Ascending aorta (tissue), 2 donors: ENCODE measurements at regions of chr2 and their contacts with region 1.

Region 1: DNA sequence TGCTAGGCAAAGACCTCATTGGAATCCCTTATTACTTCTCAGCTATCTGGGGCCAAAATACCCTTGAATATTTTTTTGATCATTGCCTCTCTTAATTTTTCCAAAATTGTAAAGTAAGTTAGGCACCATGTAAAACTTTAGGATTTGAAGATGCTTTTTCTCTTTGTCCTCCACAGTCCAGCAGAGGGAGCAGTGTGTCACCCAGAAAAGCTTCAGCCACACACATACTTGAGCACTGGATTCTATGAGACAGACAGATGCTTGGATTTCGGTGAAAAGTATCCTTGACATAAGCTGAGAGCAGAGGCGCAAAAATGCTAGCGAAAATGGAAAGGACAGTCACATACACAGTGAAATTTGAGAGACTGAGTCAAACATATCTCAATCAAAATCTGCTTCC is 74.7 kb upstream of the KCNJ3 start:
- DNase-seq: peak in 1 of 2 donors; percentile 65
- H3K4me3 ChIP-seq: no peak overlapping the region
- H3K27ac ChIP-seq: no peak overlapping the region
- H3K4me1 ChIP-seq: no peaks in the 10 kb centered on the region
- H3K27me3 ChIP-seq: no peaks in the 10 kb centered on the region
- CTCF ChIP-seq: peak; percentile 27 to 74 (median 73)

Region 2: GRCh38 chr2:154452906-154453493 is 170.8 kb before region 1 on chr2:
- intact Hi-C with region 1: loop called (anchors 10 kb)
- DNase-seq: no peak
- H3K4me3 ChIP-seq: no peak overlapping the region
- H3K27ac ChIP-seq: no peak overlapping the region
- H3K4me1 ChIP-seq: no peaks in the 10 kb centered on the region
- H3K27me3 ChIP-seq: no peaks in the 10 kb centered on the region
- CTCF ChIP-seq: peak in 2 of 3 experiments; percentile 31 to 54

Region 3: GRCh38 chr2:154637456-154637855 is 13.6 kb after region 1 on chr2:
- intact Hi-C with region 1: no loop called
- DNase-seq: no peak
- H3K4me3 ChIP-seq: no peak overlapping the region
- H3K27ac ChIP-seq: peak overlapping the region; percentile 12 to 32
- H3K4me1 ChIP-seq: peaks cover 3 to 10% of the 10 kb centered on the region in 2 donors
- H3K27me3 ChIP-seq: no peaks in the 10 kb centered on the region
- CTCF ChIP-seq: no peak

Region 4: GRCh38 chr2:154697418-154698252 is 73.8 kb after region 1 on chr2:
- intact Hi-C with region 1: loop called (anchors 5 kb)
- DNase-seq: peak in 1 of 2 donors; percentile 67
- H3K4me3 ChIP-seq: peak overlapping the region; percentile 64 to 75
- H3K27ac ChIP-seq: peak overlapping the region; percentile 58
- H3K4me1 ChIP-seq: peaks cover 0 to 4% of the 10 kb centered on the region in 2 donors
- H3K27me3 ChIP-seq: no peaks in the 10 kb centered on the region
- CTCF ChIP-seq: no peak

Region 5: DNA sequence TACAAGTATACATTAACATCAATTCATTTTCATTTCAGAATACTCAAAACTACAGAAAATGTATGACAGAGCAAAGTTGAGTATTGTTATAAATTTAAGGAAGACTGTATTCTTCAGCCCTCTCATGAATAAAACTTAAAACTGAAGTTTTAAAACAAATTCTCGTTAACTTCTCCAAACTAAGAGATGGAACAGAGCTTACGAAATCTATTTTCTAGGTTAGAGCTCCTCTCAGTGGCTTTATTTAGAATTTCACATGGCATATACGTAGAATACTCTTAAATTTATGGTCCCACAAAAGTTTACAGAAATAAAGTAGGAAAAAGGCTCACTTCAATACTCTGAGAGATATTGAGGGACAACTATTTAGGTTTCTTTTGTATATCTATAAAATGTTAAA is 686.8 kb after region 1 on chr2:
- intact Hi-C with region 1: loop called (anchors 10 kb)
- DNase-seq: no peak
- H3K4me3 ChIP-seq: no peak overlapping the region
- H3K27ac ChIP-seq: no peak overlapping the region
- H3K4me1 ChIP-seq: no peaks in the 10 kb centered on the region
- H3K27me3 ChIP-seq: no peaks in the 10 kb centered on the region
- CTCF ChIP-seq: peak in 2 of 3 experiments; percentile 19 to 41